HCT116 (cell line): ENCODE measurements at regions of chr2 and their contacts with region 1.

Region 1: GRCh38 chr2:222976521-222977076 is 75.4 kb upstream of the KCNE4 start:
- DNase-seq: no peak
- ATAC-seq: no peak
- H3K4me3 ChIP-seq: no peak overlapping the region
- H3K27ac ChIP-seq: no peak overlapping the region
- H3K4me1 ChIP-seq: peaks cover 6 to 21% of the 10 kb centered on the region in 2 experiments; a peak in 2 of 4 replicates
- H3K27me3 ChIP-seq: no peaks in the 10 kb centered on the region
- CTCF ChIP-seq: no peak
- POLR2A ChIP-seq: no peak
- RAD21 ChIP-seq: no peak

Region 2: DNA sequence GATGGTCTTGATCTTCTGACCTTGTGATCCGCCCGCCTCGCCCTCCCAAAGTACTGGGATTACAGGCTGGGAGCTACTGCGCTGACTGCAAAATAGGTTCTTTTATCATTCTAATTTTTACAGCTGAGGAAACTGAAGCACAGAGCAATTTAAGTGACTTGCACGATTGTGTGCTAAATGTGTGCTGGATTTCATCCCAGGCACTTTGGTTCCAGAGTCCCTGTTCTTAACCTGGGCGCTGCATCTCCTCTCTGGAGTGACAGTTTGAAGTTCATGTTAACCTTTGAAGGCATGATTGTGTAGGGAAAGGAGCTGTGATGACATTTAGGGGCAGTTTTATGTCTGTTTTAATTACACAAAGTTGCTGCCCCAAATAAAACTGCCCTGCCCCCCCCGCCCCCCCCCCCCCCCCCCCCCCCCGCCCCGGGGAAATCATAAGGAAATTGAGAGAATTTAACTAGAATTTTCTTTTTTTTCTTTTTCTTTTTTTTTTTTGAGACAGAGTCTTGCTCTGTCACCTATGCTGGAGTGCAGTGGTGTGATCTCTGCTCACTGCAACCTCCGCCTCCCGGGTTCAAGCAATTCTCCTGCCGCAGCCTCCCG is 110.1 kb before region 1 on chr2:
- CTCF ChIA-PET with region 1: no interaction called
- POLR2A ChIA-PET with region 1: no interaction called
- RAD21 ChIA-PET with region 1: no interaction called
- intact Hi-C with region 1: no loop called
- DNase-seq: no peak
- ATAC-seq: no peak
- H3K4me3 ChIP-seq: no peak overlapping the region
- H3K27ac ChIP-seq: no peak overlapping the region
- H3K4me1 ChIP-seq: peaks cover 21 to 32% of the 10 kb centered on the region in 2 experiments
- H3K27me3 ChIP-seq: no peaks in the 10 kb centered on the region
- CTCF ChIP-seq: no peak
- POLR2A ChIP-seq: no peak
- RAD21 ChIP-seq: no peak

Region 3: DNA sequence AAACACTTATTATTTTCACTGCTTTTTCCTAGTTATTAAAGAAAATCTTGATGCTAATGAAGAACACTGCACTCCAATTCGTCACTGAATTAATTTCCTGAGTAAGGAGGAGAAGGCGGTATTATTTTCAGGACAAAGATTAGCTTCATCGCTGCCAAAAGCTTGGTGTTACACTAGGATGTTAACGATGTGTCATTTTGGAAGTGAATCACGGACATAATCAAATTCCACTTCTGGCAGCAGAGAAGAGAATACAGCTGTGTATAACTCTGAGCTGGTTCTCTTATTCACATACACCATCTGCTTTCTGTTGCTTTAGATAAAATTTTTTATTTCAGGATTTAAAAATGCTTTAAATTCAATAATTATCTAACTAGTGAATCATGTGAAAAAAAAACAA is 551.4 kb after region 1 on chr2:
- CTCF ChIA-PET with region 1: no interaction called
- POLR2A ChIA-PET with region 1: no interaction called
- RAD21 ChIA-PET with region 1: no interaction called
- intact Hi-C with region 1: loop called (anchors 10 kb)
- DNase-seq: no peak
- ATAC-seq: no peak
- H3K4me3 ChIP-seq: no peak overlapping the region
- H3K27ac ChIP-seq: peak overlapping the region; percentile 37; the same call in 1 of the 2 replicates
- H3K4me1 ChIP-seq: peaks cover 35 to 53% of the 10 kb centered on the region in 2 experiments
- H3K27me3 ChIP-seq: no peaks in the 10 kb centered on the region
- CTCF ChIP-seq: no peak
- POLR2A ChIP-seq: no peak
- RAD21 ChIP-seq: no peak

Region 4: GRCh38 chr2:223674998-223675609 is 698.5 kb after region 1 on chr2:
- CTCF ChIA-PET with region 1: no interaction called
- POLR2A ChIA-PET with region 1: no interaction called
- RAD21 ChIA-PET with region 1: no interaction called
- intact Hi-C with region 1: loop called (anchors 5 kb)
- DNase-seq: peak; percentile 54
- ATAC-seq: peak; percentile 87
- H3K4me3 ChIP-seq: no peak overlapping the region; a peak in 1 of 4 replicates
- H3K27ac ChIP-seq: peak overlapping the region; percentile 56
- H3K4me1 ChIP-seq: peaks cover 21 to 45% of the 10 kb centered on the region in 2 experiments
- H3K27me3 ChIP-seq: no peaks in the 10 kb centered on the region
- CTCF ChIP-seq: peak; percentile 73 to 86 (median 81)
- POLR2A ChIP-seq: no peak
- RAD21 ChIP-seq: peak; percentile 82

Region 5: GRCh38 chr2:223959688-223960087 is 983.1 kb after region 1 on chr2:
- CTCF ChIA-PET with region 1: interaction called, 4 read pairs
- POLR2A ChIA-PET with region 1: no interaction called
- RAD21 ChIA-PET with region 1: no interaction called
- intact Hi-C with region 1: loop called (anchors 10 kb)
- DNase-seq: no peak
- ATAC-seq: no peak
- H3K4me3 ChIP-seq: no peak overlapping the region
- H3K27ac ChIP-seq: no peak overlapping the region
- H3K4me1 ChIP-seq: peaks cover 15 to 21% of the 10 kb centered on the region in 2 experiments
- H3K27me3 ChIP-seq: no peaks in the 10 kb centered on the region
- CTCF ChIP-seq: no peak
- POLR2A ChIP-seq: no peak
- RAD21 ChIP-seq: no peak